H1 (cell line): ENCODE measurements at regions of chr19 and their contacts with region 1.

Region 1: GRCh38 chr19:49555600-49556411 is 24.6 kb downstream of the NOSIP start:
- DNase-seq: peak; percentile 88 to 95
- H3K4me3 ChIP-seq: peak overlapping the region; percentile 37 to 78 (median 64)
- H3K27ac ChIP-seq: peak overlapping the region; percentile 66; the same call in 1 of the 2 replicates
- H3K4me1 ChIP-seq: peaks cover 5 to 22% (median 14%) of the 10 kb centered on the region in 4 experiments
- H3K27me3 ChIP-seq: no peaks in the 10 kb centered on the region; a peak in 2 of 7 replicates
- CTCF ChIP-seq: no peak
- EP300 ChIP-seq: no peak
- POLR2A ChIP-seq: peak in 1 of 2 experiments; percentile 65; a peak in 2 of 3 replicates
- RAD21 ChIP-seq: no peak

Region 2: DNA sequence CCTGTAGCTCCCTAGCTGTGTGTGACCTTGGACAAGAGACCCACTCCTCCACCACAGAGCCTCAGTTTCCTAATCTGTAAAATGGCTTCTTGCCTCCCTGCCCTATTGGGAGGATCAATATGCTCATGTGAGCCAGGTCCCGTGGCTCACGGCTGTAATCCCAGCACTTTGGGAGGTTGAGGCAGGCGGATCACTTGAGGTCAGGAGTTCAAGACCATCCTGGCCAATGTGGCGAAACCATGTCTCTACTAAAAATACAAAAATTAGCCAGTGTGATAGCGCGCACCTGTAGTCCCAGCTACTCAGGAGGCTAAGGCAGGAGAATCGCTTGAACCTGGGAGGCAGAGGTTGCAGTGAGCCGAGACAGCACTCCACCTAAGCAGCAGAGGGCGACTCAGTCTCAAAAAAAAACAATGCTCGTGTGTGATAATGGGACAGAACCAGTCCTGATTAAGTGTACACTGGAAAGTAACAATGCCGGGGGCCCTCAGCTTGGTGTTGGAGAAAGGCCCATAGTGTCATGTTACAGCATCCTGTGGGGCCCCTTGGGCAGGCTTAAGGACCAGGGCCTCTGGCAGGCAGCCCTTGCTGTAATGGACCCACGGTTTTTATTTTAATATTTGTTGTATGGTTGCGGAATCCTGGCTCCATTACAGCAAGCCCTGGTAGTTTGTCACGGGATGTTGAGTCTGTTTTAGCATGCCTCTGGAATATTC is 52.8 kb before region 1 on chr19:
- CTCF ChIA-PET with region 1: interaction called, 12 read pairs
- POLR2A ChIA-PET with region 1: interaction called, 5 read pairs
- DNase-seq: no peak
- H3K4me3 ChIP-seq: no peak overlapping the region
- H3K27ac ChIP-seq: no peak overlapping the region
- H3K4me1 ChIP-seq: peaks cover 0 to 22% (median 17%) of the 10 kb centered on the region in 4 experiments; a peak in 6 of 7 replicates
- H3K27me3 ChIP-seq: no peaks in the 10 kb centered on the region
- CTCF ChIP-seq: peak; percentile 40 to 45 (median 41); a peak in 3 of 4 replicates
- EP300 ChIP-seq: no peak
- POLR2A ChIP-seq: no peak
- RAD21 ChIP-seq: peak; percentile 55 to 59

Region 3: DNA sequence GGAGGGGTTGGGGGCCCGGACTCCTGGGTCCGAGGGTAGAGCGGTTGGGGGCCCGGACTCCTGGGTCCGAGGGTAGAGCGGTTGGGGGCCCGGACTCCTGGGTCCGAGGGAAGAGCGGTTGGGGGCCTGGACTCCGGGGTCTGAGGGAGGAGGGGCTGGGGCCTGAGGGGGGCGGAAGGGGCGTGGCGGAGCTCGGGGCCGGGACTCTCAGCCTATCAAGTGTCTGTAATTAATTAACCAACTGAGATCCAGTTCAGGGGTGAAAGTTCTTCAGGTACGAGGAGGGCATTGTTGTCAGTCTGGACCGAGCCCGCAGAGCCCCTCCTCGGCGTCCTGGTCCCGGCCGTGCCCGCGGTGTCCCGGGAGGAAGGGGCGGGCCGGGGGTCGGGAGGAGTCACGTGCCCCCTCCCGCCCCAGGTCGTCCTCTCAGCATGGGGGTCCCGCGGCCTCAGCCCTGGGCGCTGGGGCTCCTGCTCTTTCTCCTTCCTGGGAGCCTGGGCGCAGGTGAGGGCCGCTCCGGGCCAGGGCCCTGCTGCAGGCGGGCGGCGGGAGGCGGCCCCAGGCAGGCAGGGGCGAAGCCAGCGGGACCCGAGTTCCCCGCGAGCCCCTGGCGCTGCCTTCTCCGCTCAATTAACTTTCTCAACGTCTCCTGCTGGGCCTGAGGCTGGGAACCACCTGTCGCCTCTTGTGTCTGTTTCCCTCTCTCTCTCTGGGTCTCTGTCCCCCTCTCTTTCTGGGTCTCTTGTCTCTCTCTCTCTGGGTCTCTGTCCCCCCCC is 42.6 kb before region 1 on chr19:
- CTCF ChIA-PET with region 1: interaction called, 7 read pairs
- POLR2A ChIA-PET with region 1: interaction called, 16 read pairs
- DNase-seq: peak in 1 of 2 experiments; percentile 81
- H3K4me3 ChIP-seq: peak overlapping the region; percentile 66 to 93 (median 75)
- H3K27ac ChIP-seq: peak overlapping the region; percentile 55; the same call in 1 of the 2 replicates
- H3K4me1 ChIP-seq: peaks cover 0 to 9% (median 8%) of the 10 kb centered on the region in 4 experiments; a peak in 5 of 7 replicates
- H3K27me3 ChIP-seq: no peaks in the 10 kb centered on the region; a peak in 1 of 7 replicates
- CTCF ChIP-seq: no peak
- EP300 ChIP-seq: no peak
- POLR2A ChIP-seq: peak in 1 of 2 experiments; percentile 75; a peak in 2 of 3 replicates
- RAD21 ChIP-seq: no peak

Region 4: GRCh38 chr19:49528211-49528771 is 27.5 kb before region 1 on chr19:
- CTCF ChIA-PET with region 1: interaction called, 14 read pairs
- POLR2A ChIA-PET with region 1: interaction called, 17 read pairs
- DNase-seq: peak in 1 of 2 experiments; percentile 57
- H3K4me3 ChIP-seq: peak overlapping the region; percentile 36 to 65 (median 49)
- H3K27ac ChIP-seq: no peak overlapping the region
- H3K4me1 ChIP-seq: peaks cover 0 to 9% (median 3%) of the 10 kb centered on the region in 4 experiments; a peak in 5 of 7 replicates
- H3K27me3 ChIP-seq: no peaks in the 10 kb centered on the region
- CTCF ChIP-seq: no peak
- EP300 ChIP-seq: no peak
- POLR2A ChIP-seq: no peak; a peak in 1 of 3 replicates
- RAD21 ChIP-seq: no peak

Region 5: DNA sequence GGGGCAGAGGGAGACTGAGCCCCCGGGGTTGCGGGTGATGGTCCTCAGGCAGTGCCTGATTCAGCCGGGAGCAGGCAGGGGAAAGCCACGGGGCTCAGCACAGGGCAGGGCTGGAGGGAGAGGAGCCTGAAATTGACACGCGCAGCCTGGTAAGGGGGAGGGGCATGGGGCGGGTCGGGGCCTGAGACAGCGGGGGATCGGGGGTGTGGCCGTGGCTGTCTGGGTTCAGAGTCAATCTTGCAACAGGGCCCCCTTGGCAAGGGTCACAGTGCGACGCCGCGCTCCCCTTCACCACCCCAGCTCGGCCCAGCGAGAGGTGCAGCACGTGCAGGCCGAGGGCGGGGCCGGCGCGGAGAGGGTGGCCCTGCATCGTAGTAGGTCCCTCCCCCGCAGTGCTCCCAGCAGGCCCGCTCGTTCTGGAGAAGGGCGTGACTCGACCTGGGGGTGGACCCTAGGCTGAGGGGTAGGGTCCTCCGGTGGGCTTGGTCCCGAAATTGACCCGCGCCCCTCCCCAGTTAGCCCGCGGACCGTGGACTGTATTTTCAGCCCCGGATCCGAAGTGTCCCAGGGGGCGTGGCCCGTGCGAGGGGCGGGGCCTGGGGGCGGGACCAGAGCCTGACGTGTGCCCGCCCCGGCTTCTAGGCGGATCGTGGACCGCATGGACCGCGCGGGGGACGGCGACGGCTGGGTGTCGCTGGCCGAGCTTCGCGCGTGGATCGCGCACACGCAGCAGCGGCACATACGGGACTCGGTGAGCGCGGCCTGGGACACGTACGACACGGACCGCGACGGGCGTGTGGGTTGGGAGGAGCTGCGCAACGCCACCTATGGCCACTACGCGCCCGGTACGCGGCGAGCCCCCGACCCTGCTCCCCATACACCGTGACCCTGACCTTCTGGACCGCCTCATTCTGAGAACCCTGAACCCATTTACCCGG is 22.0 kb before region 1 on chr19:
- CTCF ChIA-PET with region 1: interaction called, 14 read pairs
- POLR2A ChIA-PET with region 1: interaction called, 17 read pairs
- DNase-seq: peak in 1 of 2 experiments; percentile 96
- H3K4me3 ChIP-seq: peak overlapping the region; percentile 60 to 81 (median 72)
- H3K27ac ChIP-seq: no peak overlapping the region
- H3K4me1 ChIP-seq: peaks cover 0 to 9% (median 1%) of the 10 kb centered on the region in 4 experiments; a peak in 5 of 7 replicates
- H3K27me3 ChIP-seq: no peaks in the 10 kb centered on the region; a peak in 1 of 7 replicates
- CTCF ChIP-seq: peak; percentile 22 to 76 (median 53)
- EP300 ChIP-seq: no peak
- POLR2A ChIP-seq: no peak
- RAD21 ChIP-seq: no peak

Region 6: GRCh38 chr19:49580264-49581006 is 24.6 kb after region 1 on chr19 and contains the start of gene NOSIP:
- CTCF ChIA-PET with region 1: interaction called, 240 read pairs
- POLR2A ChIA-PET with region 1: interaction called, 44 read pairs
- DNase-seq: peak; percentile 89 to 95
- H3K4me3 ChIP-seq: peak within 1 kb of the TSS; percentile 87 to 99 (median 92)
- H3K27ac ChIP-seq: peak within 1 kb of the TSS; percentile 51
- H3K4me1 ChIP-seq: peaks cover 2 to 19% (median 8%) of the 10 kb centered on the region in 4 experiments
- H3K27me3 ChIP-seq: no peaks in the 10 kb centered on the region
- CTCF ChIP-seq: no peak
- EP300 ChIP-seq: 0 out of 3 replicates have a peak, but pooled peaks of 1 of the 2 experiments have one; percentile 47
- POLR2A ChIP-seq: peak; percentile 95 to 99
- RAD21 ChIP-seq: no peak
- total RNA-seq, gene NOSIP: 85.1 and 93.8 TPM in 2 replicates